ENCODE measurements at regions of chr15 and their contacts with region 1.

Region 1: DNA sequence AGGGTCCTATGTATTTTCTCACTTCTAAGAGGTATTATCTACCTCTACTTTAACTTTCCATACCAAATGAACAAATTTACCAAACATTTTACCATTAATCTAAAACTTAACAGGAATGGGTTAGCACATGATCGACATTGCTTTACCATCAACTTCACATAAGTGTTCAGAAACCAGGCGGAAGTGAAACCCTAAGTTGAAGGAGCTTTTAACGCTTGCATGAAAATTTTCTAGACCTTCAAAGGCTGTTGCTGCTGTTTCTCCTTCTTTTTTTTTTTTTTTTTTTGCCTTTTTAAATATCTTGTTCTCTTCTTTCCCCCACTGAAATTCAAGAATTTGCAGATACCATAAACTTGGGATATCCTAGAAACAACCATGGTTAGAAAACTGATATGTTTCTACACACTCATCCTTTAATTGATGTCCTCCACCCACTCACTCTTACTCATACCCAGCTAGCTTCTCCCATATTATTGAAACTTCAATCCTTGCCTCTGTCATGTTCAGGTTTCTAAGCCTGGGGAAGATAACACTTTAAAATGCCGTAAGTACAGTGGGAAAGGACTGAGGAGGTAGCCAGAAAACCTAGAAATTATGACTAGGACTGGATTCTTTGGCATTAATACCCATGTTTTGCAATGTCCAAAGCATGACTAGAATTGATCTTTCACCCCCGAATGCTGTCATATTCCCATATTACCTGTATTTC is 24.7 kb downstream of the MYO5A start:
- DNase-seq: peak in 2 of 9 donors; percentile 11 to 15
- ATAC-seq: peak; percentile 63
- H3K4me3 ChIP-seq: no peak overlapping the region
- H3K4me3 Mint-ChIP-seq: peak overlapping the region in 9 of 10 donors; percentile 16 to 79 (median 62)
- H3K27ac ChIP-seq: no peak overlapping the region
- H3K27ac Mint-ChIP-seq: peak overlapping the region; percentile 3 to 70 (median 31)
- H3K4me1 ChIP-seq: peaks cover 6 to 7% of the 10 kb centered on the region in 2 donors
- H3K4me1 Mint-ChIP-seq: peaks cover 14 to 52% (median 31%) of the 10 kb centered on the region in 7 donors
- H3K27me3 ChIP-seq: no peaks in the 10 kb centered on the region
- H3K27me3 Mint-ChIP-seq: no peaks in the 10 kb centered on the region

Region 2: DNA sequence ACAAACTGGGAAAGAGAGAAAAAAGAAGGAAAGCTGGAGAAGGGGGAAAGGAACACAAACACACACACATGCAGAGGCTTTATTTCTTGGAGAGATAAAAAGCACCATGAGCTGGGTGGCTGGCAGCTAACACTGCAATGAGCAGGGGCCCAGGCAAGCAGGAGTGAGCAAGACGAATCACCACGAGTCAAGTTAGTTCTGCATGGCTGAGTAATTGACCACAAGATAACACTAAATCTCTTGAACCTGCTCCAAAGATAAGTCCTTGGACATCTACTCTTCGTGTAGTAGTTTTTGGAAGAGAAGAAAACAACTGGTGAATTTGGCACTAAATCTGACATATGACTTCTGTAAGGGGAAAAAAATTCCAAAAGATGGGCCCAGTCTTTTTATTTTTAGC is 76.1 kb before region 1 on chr15:
- CTCF ChIA-PET with region 1: no interaction called
- POLR2A ChIA-PET with region 1: no interaction called
- intact Hi-C with region 1: no loop called
- DNase-seq: no peak
- ATAC-seq: no peak
- H3K4me3 ChIP-seq: no peak overlapping the region
- H3K4me3 Mint-ChIP-seq: no peak overlapping the region
- H3K27ac ChIP-seq: no peak overlapping the region
- H3K27ac Mint-ChIP-seq: no peak overlapping the region
- H3K4me1 ChIP-seq: no peaks in the 10 kb centered on the region
- H3K4me1 Mint-ChIP-seq: peaks cover 4 to 7% (median 4%) of the 10 kb centered on the region in 7 donors
- H3K27me3 ChIP-seq: no peaks in the 10 kb centered on the region
- H3K27me3 Mint-ChIP-seq: no peaks in the 10 kb centered on the region

Region 3: DNA sequence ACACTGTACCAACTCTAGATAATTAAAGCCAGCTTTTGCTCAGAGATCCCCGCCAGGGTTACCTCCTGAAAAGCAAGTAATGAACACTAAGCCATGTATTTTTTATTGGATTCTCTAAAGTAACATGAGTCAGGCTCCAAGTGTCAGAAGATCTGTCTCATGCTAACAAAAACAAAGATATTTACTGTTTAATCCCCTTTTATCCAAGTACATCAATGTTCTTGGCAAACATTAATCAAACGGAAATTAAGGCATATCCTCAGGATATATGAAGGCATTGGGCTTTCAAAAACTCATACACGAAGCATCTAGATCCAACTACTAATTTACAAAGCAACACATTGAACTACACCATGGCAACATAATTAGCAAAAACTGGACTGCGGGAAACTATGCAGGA is 12.5 kb before region 1 on chr15:
- CTCF ChIA-PET with region 1: interaction called, 4 read pairs
- POLR2A ChIA-PET with region 1: interaction called, 3 read pairs
- intact Hi-C with region 1: loop called in 1 of 2 experiments (anchors 2 kb)
- DNase-seq: no peak
- ATAC-seq: no peak
- H3K4me3 ChIP-seq: no peak overlapping the region
- H3K4me3 Mint-ChIP-seq: no peak overlapping the region
- H3K27ac ChIP-seq: no peak overlapping the region
- H3K27ac Mint-ChIP-seq: no peak overlapping the region
- H3K4me1 ChIP-seq: peaks cover 5 to 19% of the 10 kb centered on the region in 2 donors
- H3K4me1 Mint-ChIP-seq: peaks cover 40 to 69% (median 47%) of the 10 kb centered on the region in 7 donors
- H3K27me3 ChIP-seq: no peaks in the 10 kb centered on the region
- H3K27me3 Mint-ChIP-seq: no peaks in the 10 kb centered on the region